ENCODE measurements at regions of chr18 and their contacts with region 1.

Region 1: DNA sequence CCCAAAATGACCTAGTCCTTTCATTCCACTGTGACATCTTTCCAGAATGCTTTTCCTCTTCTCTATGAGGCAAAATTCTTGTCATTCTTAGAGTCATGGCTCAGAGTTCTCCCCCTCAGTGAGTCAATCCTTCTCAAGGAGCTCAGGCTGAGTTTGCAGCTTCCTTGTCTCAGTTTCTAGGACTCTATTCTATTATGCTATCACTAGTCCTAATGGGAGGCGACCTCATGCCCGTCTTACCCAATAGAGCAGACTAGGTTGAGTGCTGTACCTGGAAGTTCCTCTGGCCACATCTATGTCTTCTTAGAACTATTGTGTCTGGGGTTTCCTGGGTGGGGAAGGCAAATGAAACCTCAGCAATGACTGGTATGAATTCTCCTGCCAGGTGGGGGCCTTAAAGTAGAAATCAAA is 51.5 kb downstream of the HAUS1 start:
- DNase-seq: peak; percentile 67
- H3K4me3 Mint-ChIP-seq: no peak overlapping the region
- H3K27ac Mint-ChIP-seq: peak overlapping the region; percentile 90
- H3K4me1 Mint-ChIP-seq: peaks cover 81% of the 10 kb centered on the region
- H3K27me3 Mint-ChIP-seq: no peaks in the 10 kb centered on the region
- CTCF ChIP-seq: no peak

Region 2: DNA sequence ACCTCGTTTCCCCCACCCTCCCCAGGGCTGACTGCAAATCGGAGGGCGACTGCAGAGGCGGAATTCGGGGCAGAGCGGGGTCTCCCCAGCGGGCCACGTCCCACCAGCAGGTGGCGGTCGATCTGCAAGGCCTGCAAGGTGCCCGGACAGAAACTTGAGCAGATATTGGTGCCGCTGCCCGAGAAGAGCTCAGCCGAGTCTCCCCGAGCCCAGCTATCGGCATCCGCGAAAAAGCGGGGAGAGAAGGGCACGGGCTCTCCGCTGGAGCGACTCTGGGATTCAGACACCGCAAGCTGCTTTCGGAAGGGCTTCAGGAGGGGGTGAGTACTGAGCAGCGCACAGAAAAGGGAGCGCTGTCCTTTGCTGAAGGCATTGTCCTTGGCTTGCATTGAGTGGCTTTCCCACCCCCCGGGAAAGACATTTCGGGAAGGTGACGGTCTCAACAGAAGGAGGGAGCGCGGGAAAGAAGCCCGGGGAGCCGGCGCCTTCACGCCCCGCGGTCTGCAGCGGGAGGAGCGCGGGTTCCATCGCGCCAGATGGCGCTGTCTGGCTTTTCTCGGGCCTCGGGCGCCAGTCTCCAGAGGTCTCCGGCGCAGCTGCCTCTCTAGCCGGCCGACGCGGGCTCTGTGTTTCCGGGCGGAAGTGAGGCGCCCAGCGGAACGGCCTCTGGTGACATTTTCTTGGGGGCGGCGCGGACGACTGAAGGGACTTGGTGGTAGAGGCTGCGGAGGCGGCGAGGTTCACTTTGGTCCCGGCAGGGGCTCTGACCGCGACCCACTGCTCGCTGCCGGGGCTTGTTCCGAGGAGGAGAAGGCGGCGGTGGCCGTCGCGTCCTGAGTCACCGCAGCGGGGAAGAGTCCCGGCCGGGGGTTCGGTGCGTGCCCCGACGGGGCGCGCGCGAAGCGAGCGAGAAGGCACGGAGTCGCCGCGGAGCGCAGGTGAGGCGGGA is 18.0 kb after region 1 on chr18:
- CTCF ChIA-PET with region 1: interaction called, 26 read pairs
- intact Hi-C with region 1: no loop called
- DNase-seq: peak; percentile 97
- H3K4me3 Mint-ChIP-seq: peak overlapping the region; percentile 97
- H3K27ac Mint-ChIP-seq: peak overlapping the region; percentile 97
- H3K4me1 Mint-ChIP-seq: peaks cover 9% of the 10 kb centered on the region
- H3K27me3 Mint-ChIP-seq: no peaks in the 10 kb centered on the region
- CTCF ChIP-seq: peak; percentile 93

Region 3: DNA sequence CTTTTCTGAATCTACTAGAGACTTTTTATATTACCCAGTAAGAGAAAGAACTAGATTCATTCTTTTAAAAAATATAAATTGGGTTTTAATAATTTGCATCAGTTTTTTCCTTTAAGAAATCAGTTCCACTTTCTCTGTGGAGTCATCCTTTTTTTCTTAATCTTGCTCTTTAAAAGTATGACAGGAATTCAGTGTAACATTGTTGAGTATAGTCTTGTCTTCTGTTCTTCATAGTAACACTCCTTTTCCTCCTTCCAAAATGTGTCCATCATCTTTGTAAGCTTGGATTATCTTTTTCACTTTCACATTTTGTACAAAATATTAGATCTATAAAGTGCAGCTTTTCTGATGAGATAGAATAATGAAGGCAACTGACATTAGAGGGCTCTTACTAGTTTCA is 83.9 kb after region 1 on chr18:
- CTCF ChIA-PET with region 1: no interaction called
- intact Hi-C with region 1: no loop called
- DNase-seq: no peak
- H3K4me3 Mint-ChIP-seq: no peak overlapping the region
- H3K27ac Mint-ChIP-seq: no peak overlapping the region
- H3K4me1 Mint-ChIP-seq: peaks cover 24% of the 10 kb centered on the region
- H3K27me3 Mint-ChIP-seq: no peaks in the 10 kb centered on the region
- CTCF ChIP-seq: no peak

Region 4: GRCh38 chr18:46265196-46266156 is 109.8 kb after region 1 on chr18:
- CTCF ChIA-PET with region 1: no interaction called
- intact Hi-C with region 1: loop called (anchors 5 kb)
- DNase-seq: no peak
- H3K4me3 Mint-ChIP-seq: no peak overlapping the region
- H3K27ac Mint-ChIP-seq: no peak overlapping the region
- H3K4me1 Mint-ChIP-seq: peaks cover 5% of the 10 kb centered on the region
- H3K27me3 Mint-ChIP-seq: no peaks in the 10 kb centered on the region
- CTCF ChIP-seq: no peak

Region 5: GRCh38 chr18:46333431-46334135 is 177.9 kb after region 1 on chr18:
- CTCF ChIA-PET with region 1: no interaction called
- intact Hi-C with region 1: no loop called
- DNase-seq: peak; percentile 19
- H3K4me3 Mint-ChIP-seq: peak overlapping the region; percentile 78
- H3K27ac Mint-ChIP-seq: no peak overlapping the region
- H3K4me1 Mint-ChIP-seq: peaks cover 19% of the 10 kb centered on the region
- H3K27me3 Mint-ChIP-seq: peaks cover 70% of the 10 kb centered on the region
- CTCF ChIP-seq: no peak

Region 6: DNA sequence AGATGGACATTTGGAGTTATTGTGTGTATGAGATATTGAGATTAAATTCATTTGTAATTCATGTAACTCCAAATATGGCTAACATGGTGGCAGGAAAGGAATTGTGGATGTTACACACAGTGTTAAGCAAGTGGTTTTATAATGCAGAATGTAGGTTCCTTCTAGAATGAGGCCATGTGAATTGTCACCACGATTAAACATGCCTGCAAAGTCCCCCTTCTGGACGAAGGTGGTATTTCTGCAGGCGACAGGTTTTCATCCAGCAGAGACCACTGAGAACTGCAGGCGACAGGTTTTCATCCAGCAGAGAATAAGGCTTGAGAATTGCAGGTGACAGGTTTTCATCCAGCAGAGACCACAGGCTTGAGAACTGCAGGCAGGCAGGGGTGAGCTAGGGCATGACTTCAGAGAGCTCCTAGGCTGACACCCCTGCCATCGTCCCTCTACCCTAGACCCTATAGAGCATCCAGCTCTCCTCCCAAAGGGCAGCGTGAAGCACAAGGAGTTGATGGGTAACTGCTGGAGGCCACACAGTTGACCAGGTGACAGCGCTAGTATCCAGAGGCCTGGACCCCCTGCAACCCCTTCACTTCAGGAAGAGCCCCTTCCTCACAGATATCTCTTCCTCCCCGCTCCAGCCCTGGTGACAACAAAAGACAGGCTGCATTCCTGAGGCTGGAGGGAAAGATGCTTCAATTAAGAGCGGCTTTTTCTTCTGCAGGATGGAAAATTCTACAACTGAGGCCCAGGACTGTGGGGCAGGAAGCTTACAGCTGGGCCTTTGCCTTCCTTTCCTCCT is 325.6 kb after region 1 on chr18:
- CTCF ChIA-PET with region 1: no interaction called
- intact Hi-C with region 1: loop called (anchors 5 kb)
- DNase-seq: peak; percentile 72
- H3K4me3 Mint-ChIP-seq: no peak overlapping the region
- H3K27ac Mint-ChIP-seq: no peak overlapping the region
- H3K4me1 Mint-ChIP-seq: no peaks in the 10 kb centered on the region
- H3K27me3 Mint-ChIP-seq: peaks cover 29% of the 10 kb centered on the region
- CTCF ChIP-seq: peak; percentile 60

Region 7: DNA sequence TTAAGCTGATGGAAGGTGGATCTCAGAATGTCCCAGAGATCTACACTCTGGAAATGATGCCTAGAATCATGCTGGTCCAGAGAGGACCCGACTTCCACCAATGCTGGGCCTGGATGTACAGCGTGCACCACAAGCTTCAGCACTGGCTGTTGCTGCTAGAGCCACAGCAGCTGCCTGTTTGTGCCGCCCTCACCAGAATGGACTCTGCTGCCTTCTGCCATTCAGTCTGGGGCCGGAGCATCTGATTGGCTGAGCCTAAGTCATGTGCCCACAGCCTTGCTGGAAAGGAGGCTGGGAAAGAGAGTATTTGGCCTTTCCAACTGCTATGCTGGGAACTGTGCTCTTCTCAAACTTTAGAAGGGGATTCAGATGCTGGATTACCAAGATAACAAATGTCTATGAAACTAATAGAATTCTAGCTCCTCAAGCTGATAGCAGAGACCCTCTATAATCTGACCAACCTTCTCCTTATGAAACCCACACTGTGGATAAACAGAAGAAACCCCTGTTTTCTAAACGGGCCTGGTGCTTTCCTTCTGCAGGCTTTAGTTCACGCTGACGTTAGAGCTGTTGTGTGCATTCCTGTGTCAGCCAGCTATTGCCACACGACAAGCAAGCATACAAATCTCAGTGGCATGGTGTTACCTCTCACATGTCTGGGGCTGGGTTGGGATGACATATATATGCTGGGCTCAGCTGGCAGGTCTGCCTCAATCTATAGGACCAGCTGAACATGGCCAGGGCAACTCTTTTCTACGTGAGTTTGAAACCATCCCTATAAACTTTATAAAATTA is 505.5 kb after region 1 on chr18:
- CTCF ChIA-PET with region 1: interaction called, 4 read pairs
- intact Hi-C with region 1: loop called (anchors 1 kb)
- DNase-seq: peak; percentile 17
- H3K4me3 Mint-ChIP-seq: no peak overlapping the region
- H3K27ac Mint-ChIP-seq: no peak overlapping the region
- H3K4me1 Mint-ChIP-seq: no peaks in the 10 kb centered on the region
- H3K27me3 Mint-ChIP-seq: peaks cover 84% of the 10 kb centered on the region
- CTCF ChIP-seq: no peak

Measured in Calu3 (cell line).